Right cardiac atrium (tissue), 5 donors: ENCODE measurements at regions of chr6 and their contacts with region 1.

Region 1: DNA sequence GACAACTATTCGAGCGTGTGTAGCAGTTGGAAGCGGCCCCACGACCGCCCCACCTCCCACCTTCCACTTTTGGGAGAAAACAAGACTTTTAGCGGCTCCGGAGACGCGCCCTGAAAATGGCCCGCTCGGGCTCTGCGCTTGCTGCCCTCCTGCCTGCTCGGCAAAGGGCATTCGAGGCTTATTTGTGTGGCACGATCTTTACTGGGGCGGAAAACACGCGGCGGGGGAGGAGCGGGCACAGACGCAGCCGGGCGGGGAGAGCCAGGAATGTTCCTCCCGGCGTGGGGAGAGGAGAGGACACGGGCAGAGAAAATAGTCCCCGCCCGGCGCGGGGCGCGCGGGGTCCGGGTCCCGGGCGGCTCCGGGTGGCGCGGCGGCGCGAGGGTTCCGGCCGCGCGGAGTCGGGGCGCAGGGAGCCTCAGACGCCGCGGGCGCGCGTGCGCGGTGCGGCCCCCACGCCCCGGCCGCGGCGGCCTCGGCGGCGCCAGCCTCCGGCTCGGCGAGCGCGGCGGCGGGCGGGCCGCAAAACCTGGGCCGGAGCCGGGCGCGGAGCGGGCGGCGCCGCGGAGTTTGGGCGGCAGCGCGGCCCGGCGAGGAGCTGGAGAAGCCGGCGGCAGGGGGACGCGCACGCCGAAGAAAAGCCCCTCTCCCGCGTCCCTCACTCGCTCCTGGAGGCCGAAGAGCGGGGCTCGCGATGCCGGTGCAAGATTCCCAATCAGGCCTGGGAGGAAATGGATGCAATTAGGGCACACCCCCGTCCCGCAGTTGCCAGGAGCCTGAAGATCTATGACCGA is 90.0 kb upstream of the ARID1B start:
- DNase-seq: peak; percentile 91 to 97 (median 96)
- ATAC-seq: peak; percentile 96 to 97
- H3K4me3 ChIP-seq: peak overlapping the region; percentile 61
- H3K27ac ChIP-seq: peak overlapping the region; percentile 96
- H3K4me1 ChIP-seq: no peaks in the 10 kb centered on the region
- H3K27me3 ChIP-seq: no peaks in the 10 kb centered on the region

Region 2: GRCh38 chr6:156564127-156564806 is 122.9 kb before region 1 on chr6:
- intact Hi-C with region 1: loop called in 3 of 4 experiments (anchors 10 kb)
- DNase-seq: peak; percentile 79 to 92 (median 91)
- ATAC-seq: peak; percentile 95 to 96
- H3K4me3 ChIP-seq: no peak overlapping the region
- H3K27ac ChIP-seq: no peak overlapping the region
- H3K4me1 ChIP-seq: no peaks in the 10 kb centered on the region
- H3K27me3 ChIP-seq: no peaks in the 10 kb centered on the region

Region 3: DNA sequence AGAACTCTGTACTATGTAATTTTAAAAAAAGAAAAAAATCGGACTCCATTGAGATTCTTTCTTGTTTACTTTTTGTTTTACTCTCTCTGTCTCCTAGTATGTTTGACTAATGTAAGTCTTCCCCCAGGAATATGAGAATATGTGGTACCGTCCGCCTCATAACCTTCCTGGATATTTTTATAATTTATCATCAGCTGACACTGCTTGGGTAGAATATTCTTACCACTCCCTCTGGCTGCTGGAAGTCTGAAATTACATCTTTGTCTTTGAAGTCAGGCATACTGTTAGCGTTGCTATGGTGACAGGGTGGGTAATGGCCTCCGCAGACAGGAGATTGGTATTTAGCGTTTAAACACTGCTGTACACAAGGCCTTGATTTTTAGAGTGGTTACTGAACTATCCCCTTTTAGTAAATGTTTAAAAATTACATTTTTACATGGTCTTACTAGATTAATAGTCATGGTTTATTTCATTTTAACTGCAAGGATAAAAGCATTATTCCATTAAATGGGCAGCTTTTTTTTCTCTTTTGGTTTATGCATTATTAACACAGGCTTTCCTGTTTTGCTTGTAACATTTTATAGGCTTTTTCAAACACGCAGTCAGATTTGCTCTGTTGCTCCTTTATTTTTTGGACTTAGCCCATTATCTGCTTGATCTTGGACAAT is 266.4 kb after region 1 on chr6:
- intact Hi-C with region 1: loop called in 1 of 4 experiments (anchors 10 kb)
- DNase-seq: no peak
- ATAC-seq: peak; percentile 63 to 74
- H3K4me3 ChIP-seq: no peak overlapping the region
- H3K27ac ChIP-seq: no peak overlapping the region
- H3K4me1 ChIP-seq: peaks cover 17% of the 10 kb centered on the region
- H3K27me3 ChIP-seq: no peaks in the 10 kb centered on the region

Region 4: DNA sequence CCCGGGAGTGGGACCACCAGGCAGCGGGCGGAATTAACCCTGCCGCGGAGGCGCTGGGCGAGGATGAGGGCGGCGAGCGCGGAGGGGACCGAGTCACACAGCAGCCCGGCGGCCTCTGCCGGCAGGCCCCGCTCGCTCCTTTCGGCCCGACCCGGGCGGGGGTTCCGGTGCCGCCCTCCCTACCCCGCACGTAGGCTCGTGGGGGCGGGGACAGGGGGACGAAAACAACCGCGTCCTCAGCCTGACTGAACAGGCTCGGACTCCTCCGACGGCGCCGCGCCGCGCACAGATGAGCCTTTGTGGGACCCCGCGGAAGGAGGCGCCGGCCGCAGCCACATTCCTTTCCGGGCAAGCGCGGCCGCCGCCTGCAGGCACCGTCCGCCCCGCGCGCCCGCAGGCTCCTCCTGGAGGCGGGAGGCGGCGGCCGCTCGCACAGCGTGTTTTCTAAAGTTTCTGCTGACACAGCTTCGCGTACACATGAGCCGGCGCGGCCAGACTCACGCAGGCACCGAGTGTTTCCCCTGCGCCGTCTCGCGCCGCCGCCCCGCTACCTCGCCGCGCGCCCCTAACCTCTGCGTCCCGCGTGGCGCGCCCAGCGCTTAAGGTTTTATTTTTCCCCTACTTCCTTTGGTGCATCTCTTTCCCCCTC is 334.3 kb after region 1 on chr6:
- intact Hi-C with region 1: loop called in 2 of 4 experiments (anchors 2 to 5 kb)
- DNase-seq: peak; percentile 94 to 97 (median 96)
- ATAC-seq: peak; percentile 97
- H3K4me3 ChIP-seq: peak overlapping the region; percentile 80
- H3K27ac ChIP-seq: peak overlapping the region; percentile 99
- H3K4me1 ChIP-seq: peaks cover 3% of the 10 kb centered on the region
- H3K27me3 ChIP-seq: no peaks in the 10 kb centered on the region